Ascending aorta (tissue), 2 donors: ENCODE measurements at regions of chr2 and their contacts with region 1.

Region 1: DNA sequence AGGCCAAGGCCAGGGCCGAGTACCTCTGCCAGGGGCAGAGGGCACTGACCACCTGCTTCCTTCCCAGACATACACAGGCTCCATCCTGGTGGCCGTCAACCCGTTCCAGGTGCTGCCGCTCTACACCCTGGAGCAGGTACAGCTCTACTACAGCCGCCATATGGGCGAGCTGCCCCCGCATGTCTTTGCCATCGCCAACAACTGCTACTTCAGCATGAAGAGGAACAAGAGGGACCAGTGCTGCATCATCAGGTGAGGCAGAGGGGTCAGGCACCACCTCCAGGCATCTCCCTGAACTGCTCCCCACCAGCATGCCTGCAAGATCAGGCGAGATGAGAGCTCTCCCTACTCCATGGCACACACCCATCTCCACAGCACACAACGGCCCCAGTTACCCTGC is 31.1 kb downstream of the MYO7B start:
- DNase-seq: peak in 1 of 2 donors; percentile 50
- H3K4me3 ChIP-seq: no peak overlapping the region
- H3K27ac ChIP-seq: no peak overlapping the region
- H3K4me1 ChIP-seq: peaks cover 14 to 34% of the 10 kb centered on the region in 2 donors
- H3K27me3 ChIP-seq: no peaks in the 10 kb centered on the region
- CTCF ChIP-seq: no peak

Region 2: GRCh38 chr2:127649684-127650040 is 83.1 kb after region 1 on chr2:
- intact Hi-C with region 1: loop called (anchors 5 kb)
- DNase-seq: peak in 1 of 2 donors; percentile 91
- H3K4me3 ChIP-seq: peak overlapping the region in 1 of 2 donors; percentile 5
- H3K27ac ChIP-seq: peak overlapping the region; percentile 40 to 58
- H3K4me1 ChIP-seq: peaks cover 18 to 51% of the 10 kb centered on the region in 2 donors
- H3K27me3 ChIP-seq: no peaks in the 10 kb centered on the region
- CTCF ChIP-seq: peak; percentile 68 to 80 (median 80)

Region 3: DNA sequence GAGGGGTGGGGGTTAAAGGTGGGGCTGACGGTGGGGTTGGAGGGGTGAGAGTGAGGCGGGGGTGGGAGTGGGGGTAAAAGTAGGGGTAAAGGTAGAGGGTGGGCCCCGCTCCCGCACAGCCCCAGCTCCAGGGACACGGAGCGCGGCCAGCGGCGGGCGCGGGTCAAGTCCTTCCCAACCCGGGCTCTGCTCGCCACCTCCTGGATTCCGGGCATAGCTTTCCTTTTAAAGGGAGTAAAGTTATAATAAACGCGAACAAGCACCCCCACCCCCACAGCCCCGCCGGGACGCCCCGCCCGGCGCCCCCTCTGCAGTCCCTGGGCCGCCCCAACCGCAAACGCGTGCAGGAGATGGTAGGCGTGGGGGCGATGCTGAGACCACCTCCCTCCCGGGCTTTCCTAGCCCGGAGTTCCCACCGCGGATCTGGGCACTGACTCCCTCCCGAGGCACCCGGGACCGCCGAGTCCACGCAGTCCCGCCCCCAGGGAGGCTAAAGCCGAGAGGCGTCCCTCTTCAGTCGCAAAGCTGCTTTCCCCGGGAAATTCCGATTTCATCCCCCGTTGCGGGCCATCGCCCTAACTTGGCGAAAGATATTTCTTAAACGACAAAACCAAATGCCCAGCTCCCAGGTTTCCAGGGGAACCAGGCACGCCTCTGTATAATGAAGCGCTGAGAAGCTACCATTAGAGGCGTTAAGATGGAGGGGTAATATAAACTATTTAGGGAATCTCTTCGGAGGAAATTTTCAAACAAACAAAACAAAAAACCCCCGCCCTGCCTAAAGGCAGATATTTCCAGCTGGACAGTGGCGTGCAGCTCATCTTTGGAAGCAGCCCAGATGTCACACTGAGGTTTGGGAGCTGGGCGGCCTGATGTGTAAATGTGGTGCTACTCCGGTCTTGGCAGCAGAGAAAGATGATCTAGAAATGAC is 109.0 kb after region 1 on chr2 and contains the start of gene LIMS2:
- intact Hi-C with region 1: no loop called
- DNase-seq: peak in 1 of 2 donors; percentile 82
- H3K4me3 ChIP-seq: peak within 1 kb of the TSS; percentile 94 to 99
- H3K27ac ChIP-seq: peak within 1 kb of the TSS; percentile 89 to 92
- H3K4me1 ChIP-seq: peaks cover 0 to 23% of the 10 kb centered on the region in 2 donors
- H3K27me3 ChIP-seq: no peaks in the 10 kb centered on the region
- CTCF ChIP-seq: peak in 2 of 3 experiments; percentile 16 to 22
- total RNA-seq, gene LIMS2: 169 TPM